HEK293T (cell line): ENCODE measurements at regions of chr5 and their contacts with region 1.

Region 1: GRCh38 chr5:73485715-73486114 is 12.5 kb upstream of the BTF3 start:
- DNase-seq: no peak

Region 2: DNA sequence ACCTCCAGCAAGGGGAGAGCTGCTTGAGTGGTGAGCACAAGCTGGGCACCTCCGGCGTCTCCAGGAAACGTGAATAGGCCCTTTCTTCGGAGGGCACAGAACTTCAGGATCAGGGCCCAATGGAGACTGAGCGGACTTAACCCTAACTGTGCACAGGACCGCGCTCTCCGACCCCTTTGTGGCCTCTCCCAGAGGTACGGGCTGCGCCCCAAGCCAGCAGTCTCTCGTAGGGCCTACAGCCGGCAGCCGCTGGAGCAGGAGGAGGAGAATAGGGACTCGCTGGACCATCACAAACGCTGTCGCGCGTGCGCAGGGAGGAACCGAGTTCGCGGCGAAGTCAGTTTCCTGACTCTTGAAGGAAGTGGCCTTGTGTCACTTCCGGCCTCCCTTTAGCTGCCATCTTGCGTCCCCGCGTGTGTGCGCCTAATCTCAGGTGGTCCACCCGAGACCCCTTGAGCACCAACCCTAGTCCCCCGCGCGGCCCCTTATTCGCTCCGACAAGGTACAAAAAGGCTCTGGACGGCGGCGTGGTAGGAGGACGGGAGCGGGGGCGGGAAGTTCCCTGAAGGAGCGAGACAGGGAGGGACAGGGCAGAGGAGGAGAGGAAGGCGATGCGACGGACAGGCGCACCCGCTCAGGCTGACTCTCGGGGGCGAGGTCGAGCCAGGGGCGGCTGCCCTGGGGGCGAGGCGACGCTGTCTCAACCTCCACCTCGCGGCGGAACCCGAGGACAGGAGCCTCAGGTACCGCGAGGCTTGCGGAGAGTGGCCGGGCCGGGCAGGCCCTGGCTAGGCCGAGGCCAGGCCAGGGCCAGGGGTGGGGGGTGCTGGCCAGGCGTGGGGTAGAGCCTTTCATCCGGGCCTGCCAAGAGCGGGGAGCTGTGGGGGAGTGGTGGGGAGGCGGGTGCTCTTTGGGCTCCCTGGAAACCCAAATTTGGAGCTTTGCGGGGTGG is 12.6 kb after region 1 on chr5 and contains the start of gene BTF3:
- CTCF ChIA-PET with region 1: no interaction called
- POLR2A ChIA-PET with region 1: interaction called, 14 read pairs
- DNase-seq: peak; percentile 91